Activated B cell treated with CpG ODN at 0.5 μM for 24 hours (primary cell): ENCODE measurements at regions of chr1 and their contacts with region 1.

Region 1: GRCh38 chr1:64864018-64864940 is 102.1 kb downstream of the JAK1 start:
- DNase-seq: peak; percentile 58
- ATAC-seq: peak; percentile 93
- H3K4me3 Mint-ChIP-seq: peak overlapping the region; percentile 69
- H3K27ac Mint-ChIP-seq: peak overlapping the region; percentile 89
- H3K4me1 Mint-ChIP-seq: peaks cover 73% of the 10 kb centered on the region
- H3K27me3 Mint-ChIP-seq: no peaks in the 10 kb centered on the region
- CTCF ChIP-seq: no peak

Region 2: GRCh38 chr1:64956733-64957441 is 92.6 kb after region 1 on chr1:
- CTCF ChIA-PET with region 1: no interaction called
- POLR2A ChIA-PET with region 1: interaction called, 6 read pairs
- intact Hi-C with region 1: loop called (anchors 1 kb)
- DNase-seq: no peak
- ATAC-seq: peak; percentile 83
- H3K4me3 Mint-ChIP-seq: no peak overlapping the region
- H3K27ac Mint-ChIP-seq: no peak overlapping the region
- H3K4me1 Mint-ChIP-seq: peaks cover 68% of the 10 kb centered on the region
- H3K27me3 Mint-ChIP-seq: no peaks in the 10 kb centered on the region
- CTCF ChIP-seq: no peak

Region 3: GRCh38 chr1:65002508-65003315 is 138.4 kb after region 1 on chr1:
- CTCF ChIA-PET with region 1: no interaction called
- POLR2A ChIA-PET with region 1: no interaction called
- intact Hi-C with region 1: loop called (anchors 1 kb)
- DNase-seq: peak; percentile 66
- ATAC-seq: peak; percentile 81
- H3K4me3 Mint-ChIP-seq: peak overlapping the region; percentile 83
- H3K27ac Mint-ChIP-seq: peak overlapping the region; percentile 19
- H3K4me1 Mint-ChIP-seq: peaks cover 31% of the 10 kb centered on the region
- H3K27me3 Mint-ChIP-seq: no peaks in the 10 kb centered on the region
- CTCF ChIP-seq: no peak

Region 4: GRCh38 chr1:65036545-65037180 is 172.4 kb after region 1 on chr1:
- CTCF ChIA-PET with region 1: interaction called, 16 read pairs
- POLR2A ChIA-PET with region 1: interaction called, 3 read pairs
- intact Hi-C with region 1: loop called (anchors 1 kb)
- DNase-seq: no peak
- ATAC-seq: no peak
- H3K4me3 Mint-ChIP-seq: no peak overlapping the region
- H3K27ac Mint-ChIP-seq: no peak overlapping the region
- H3K4me1 Mint-ChIP-seq: peaks cover 11% of the 10 kb centered on the region
- H3K27me3 Mint-ChIP-seq: no peaks in the 10 kb centered on the region
- CTCF ChIP-seq: no peak

Region 5: GRCh38 chr1:65075123-65075976 is 211.1 kb after region 1 on chr1:
- CTCF ChIA-PET with region 1: interaction called, 3 read pairs
- POLR2A ChIA-PET with region 1: no interaction called
- intact Hi-C with region 1: loop called (anchors 1 kb)
- DNase-seq: no peak
- ATAC-seq: peak; percentile 94
- H3K4me3 Mint-ChIP-seq: no peak overlapping the region
- H3K27ac Mint-ChIP-seq: no peak overlapping the region
- H3K4me1 Mint-ChIP-seq: no peaks in the 10 kb centered on the region
- H3K27me3 Mint-ChIP-seq: peaks cover 5% of the 10 kb centered on the region
- CTCF ChIP-seq: peak; percentile 51